Pancreas (tissue), 10 donors: ENCODE measurements at regions of chr18 and their contacts with region 1.

Region 1: DNA sequence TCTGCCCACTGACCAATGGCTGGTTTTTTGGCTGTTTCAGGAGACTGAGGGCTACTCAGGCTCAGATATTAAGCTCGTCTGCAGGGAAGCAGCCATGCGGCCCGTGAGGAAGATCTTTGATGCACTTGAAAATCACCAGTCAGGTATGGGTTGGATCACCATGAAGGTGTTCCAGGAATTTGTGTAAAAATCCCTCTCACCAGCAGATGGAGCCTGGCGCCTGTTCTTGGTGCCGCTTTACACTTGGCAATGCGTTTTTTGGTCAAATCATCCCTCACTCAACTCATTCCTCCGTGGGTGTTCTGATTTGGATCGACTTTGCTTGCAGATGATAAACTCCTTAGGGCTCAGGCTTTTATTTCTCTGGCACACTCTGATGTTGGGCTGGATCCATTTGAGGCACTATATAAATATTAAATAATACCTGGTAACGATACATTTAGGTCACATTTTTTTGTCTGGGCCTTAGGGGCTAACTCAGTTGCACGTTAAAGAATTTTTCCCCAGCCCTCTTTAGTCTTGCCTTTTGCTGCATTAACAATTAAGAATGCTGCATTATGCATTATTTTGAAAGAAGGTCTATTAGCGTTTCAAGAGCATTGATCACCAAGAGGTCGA is 50.0 kb downstream of the HDHD2 start:
- DNase-seq: peak; percentile 18 to 73 (median 42)
- ATAC-seq: peak; percentile 80 to 93 (median 90)
- H3K4me3 ChIP-seq: no peak overlapping the region
- H3K27ac ChIP-seq: no peak overlapping the region
- H3K4me1 ChIP-seq: no peaks in the 10 kb centered on the region
- H3K27me3 ChIP-seq: no peaks in the 10 kb centered on the region
- CTCF ChIP-seq: peak; percentile 49 to 59 (median 56)

Region 2: DNA sequence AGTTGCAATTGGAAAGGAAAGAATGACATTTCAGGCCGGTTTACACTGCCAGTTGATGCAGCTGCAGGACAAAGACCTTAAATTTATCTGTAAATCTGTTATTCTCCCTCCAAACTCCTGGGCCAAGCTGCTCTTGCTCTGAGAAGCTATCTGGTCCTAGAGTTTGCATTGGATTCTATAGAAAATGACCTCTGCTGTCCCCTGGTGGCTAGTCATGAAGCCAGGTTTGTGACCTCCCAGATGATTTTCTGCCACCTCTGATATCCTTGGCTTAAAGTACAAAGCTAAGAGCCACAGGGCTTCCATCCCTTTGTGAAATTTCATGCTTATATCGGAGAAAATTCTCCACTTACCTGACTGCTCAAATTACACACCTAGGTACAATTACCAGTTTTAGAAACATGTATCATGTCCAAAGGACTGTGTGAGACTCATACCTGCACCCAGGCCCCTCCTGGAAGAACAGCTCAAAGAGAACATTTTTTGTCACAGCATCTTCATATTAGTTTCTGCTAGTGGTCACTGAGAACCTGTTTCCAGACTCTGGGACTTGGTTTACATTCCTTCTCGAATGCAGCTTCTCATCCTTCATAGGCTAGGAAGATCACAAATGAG is 104.7 kb after region 1 on chr18:
- intact Hi-C with region 1: loop called in 2 of 3 experiments (anchors 5 to 10 kb)
- DNase-seq: peak in 3 of 6 donors; percentile 11 to 57 (median 23)
- ATAC-seq: peak in 3 of 4 donors; percentile 82 to 85 (median 85)
- H3K4me3 ChIP-seq: no peak overlapping the region
- H3K27ac ChIP-seq: no peak overlapping the region
- H3K4me1 ChIP-seq: no peaks in the 10 kb centered on the region
- H3K27me3 ChIP-seq: no peaks in the 10 kb centered on the region
- CTCF ChIP-seq: peak; percentile 69 to 78 (median 72)

Region 3: GRCh38 chr18:47512056-47512455 is 411.7 kb after region 1 on chr18:
- intact Hi-C with region 1: no loop called
- DNase-seq: no peak
- ATAC-seq: peak in 1 of 4 donors; percentile 51
- H3K4me3 ChIP-seq: no peak overlapping the region
- H3K27ac ChIP-seq: no peak overlapping the region
- H3K4me1 ChIP-seq: no peaks in the 10 kb centered on the region
- H3K27me3 ChIP-seq: peaks cover 0 to 8% (median 0%) of the 10 kb centered on the region in 4 donors
- CTCF ChIP-seq: no peak

Region 4: GRCh38 chr18:47658498-47658897 is 558.2 kb after region 1 on chr18:
- intact Hi-C with region 1: no loop called
- DNase-seq: no peak
- ATAC-seq: no peak
- H3K4me3 ChIP-seq: no peak overlapping the region
- H3K27ac ChIP-seq: no peak overlapping the region
- H3K4me1 ChIP-seq: no peaks in the 10 kb centered on the region
- H3K27me3 ChIP-seq: no peaks in the 10 kb centered on the region
- CTCF ChIP-seq: no peak

Region 5: GRCh38 chr18:47756364-47757016 is 656.2 kb after region 1 on chr18:
- intact Hi-C with region 1: loop called in 1 of 3 experiments (anchors 10 kb)
- DNase-seq: peak; percentile 30 to 84 (median 69)
- ATAC-seq: peak; percentile 66 to 92 (median 86)
- H3K4me3 ChIP-seq: no peak overlapping the region
- H3K27ac ChIP-seq: no peak overlapping the region
- H3K4me1 ChIP-seq: no peaks in the 10 kb centered on the region
- H3K27me3 ChIP-seq: no peaks in the 10 kb centered on the region
- CTCF ChIP-seq: peak; percentile 72 to 87 (median 82)